HCT116 (cell line): ENCODE measurements at regions of chr1 and their contacts with region 1.

Region 1: GRCh38 chr1:205485338-205486228 is 18.9 kb upstream of the CDK18 start:
- DNase-seq: peak; percentile 56
- ATAC-seq: peak; percentile 83
- H3K4me3 ChIP-seq: no peak overlapping the region
- H3K27ac ChIP-seq: no peak overlapping the region
- H3K4me1 ChIP-seq: peaks cover 0 to 8% of the 10 kb centered on the region in 2 experiments; a peak in 3 of 4 replicates
- H3K27me3 ChIP-seq: peaks cover 18% of the 10 kb centered on the region
- CTCF ChIP-seq: peak; percentile 93 to 98 (median 95)
- POLR2A ChIP-seq: no peak
- RAD21 ChIP-seq: peak; percentile 100

Region 2: DNA sequence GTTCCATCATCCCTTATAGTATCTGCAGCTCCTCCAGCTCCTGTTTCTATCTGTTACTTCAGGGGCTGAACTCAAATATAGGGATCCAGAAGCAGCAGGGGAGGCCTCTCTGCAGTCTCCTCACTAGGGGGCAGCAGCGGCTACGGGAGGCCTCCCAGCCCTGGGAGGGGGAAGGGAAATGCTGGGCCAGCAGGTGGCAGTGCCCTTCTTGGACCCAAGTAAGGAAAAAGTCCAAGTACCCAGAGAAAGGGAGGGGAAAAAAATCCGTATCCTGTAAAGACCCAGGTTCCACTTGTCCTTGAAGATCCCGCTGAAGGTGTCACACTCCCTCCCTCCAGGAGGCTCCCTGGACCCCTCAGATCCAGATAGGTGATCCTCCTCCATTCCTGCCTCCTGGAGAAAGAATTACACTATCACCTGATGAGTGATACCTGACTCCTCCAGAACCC is 149.9 kb before region 1 on chr1:
- CTCF ChIA-PET with region 1: interaction called, 20 read pairs
- POLR2A ChIA-PET with region 1: no interaction called
- RAD21 ChIA-PET with region 1: interaction called in 1 of 2 experiments, 4 read pairs
- intact Hi-C with region 1: loop called (anchors 5 kb)
- DNase-seq: peak; percentile 79
- ATAC-seq: peak; percentile 99
- H3K4me3 ChIP-seq: no peak overlapping the region
- H3K27ac ChIP-seq: no peak overlapping the region
- H3K4me1 ChIP-seq: peaks cover 4 to 6% of the 10 kb centered on the region in 2 experiments; a peak in 3 of 4 replicates
- H3K27me3 ChIP-seq: no peaks in the 10 kb centered on the region
- CTCF ChIP-seq: peak; percentile 99 to 100 (median 99)
- POLR2A ChIP-seq: no peak
- RAD21 ChIP-seq: peak; percentile 94

Region 3: DNA sequence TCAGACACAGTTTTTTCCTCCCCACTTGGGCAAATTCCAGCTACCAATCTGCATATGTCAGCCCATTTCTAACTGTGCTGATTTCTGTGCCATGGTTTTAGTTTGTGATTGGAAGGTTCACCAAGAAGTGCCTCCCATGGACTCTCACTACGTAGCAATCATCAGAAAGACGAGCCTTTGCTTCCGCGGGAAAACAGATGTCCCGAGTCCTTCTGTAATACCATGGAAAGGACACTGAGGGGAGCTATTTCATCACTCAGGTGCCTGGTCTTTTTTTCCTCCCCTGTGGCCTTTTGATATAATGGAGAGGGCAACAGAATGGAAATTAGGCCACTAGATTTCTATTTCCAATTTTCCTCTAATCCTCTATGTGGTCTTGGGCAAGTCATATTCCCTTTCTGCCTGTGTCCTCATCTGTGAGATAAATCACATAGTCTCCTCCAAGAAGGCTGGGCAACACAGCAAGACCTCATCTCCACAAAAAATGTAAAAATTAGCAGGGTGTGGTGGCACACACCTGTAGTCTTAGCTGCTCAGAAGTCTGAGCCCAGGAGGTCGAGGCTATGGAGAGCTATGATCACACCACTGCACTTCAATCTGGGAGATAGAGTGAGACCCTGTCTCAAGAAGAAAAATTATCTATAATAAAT is 88.5 kb before region 1 on chr1:
- CTCF ChIA-PET with region 1: interaction called, 85 read pairs
- POLR2A ChIA-PET with region 1: no interaction called
- RAD21 ChIA-PET with region 1: interaction called, 20 to 26 read pairs
- intact Hi-C with region 1: loop called (anchors 1 kb)
- DNase-seq: peak; percentile 77
- ATAC-seq: peak; percentile 99
- H3K4me3 ChIP-seq: no peak overlapping the region
- H3K27ac ChIP-seq: no peak overlapping the region
- H3K4me1 ChIP-seq: peaks cover 0 to 8% of the 10 kb centered on the region in 2 experiments; a peak in 2 of 4 replicates
- H3K27me3 ChIP-seq: no peaks in the 10 kb centered on the region
- CTCF ChIP-seq: peak; percentile 82 to 97 (median 93)
- POLR2A ChIP-seq: no peak
- RAD21 ChIP-seq: peak; percentile 99

Region 4: GRCh38 chr1:205430696-205431305 is 54.8 kb before region 1 on chr1:
- CTCF ChIA-PET with region 1: interaction called, 15 read pairs
- POLR2A ChIA-PET with region 1: no interaction called
- RAD21 ChIA-PET with region 1: interaction called, 5 to 7 read pairs
- intact Hi-C with region 1: no loop called
- DNase-seq: no peak
- ATAC-seq: peak; percentile 81
- H3K4me3 ChIP-seq: peak overlapping the region; percentile 24 to 47
- H3K27ac ChIP-seq: no peak overlapping the region
- H3K4me1 ChIP-seq: peaks cover 0 to 16% of the 10 kb centered on the region in 2 experiments; a peak in 1 of 4 replicates
- H3K27me3 ChIP-seq: no peaks in the 10 kb centered on the region
- CTCF ChIP-seq: peak; percentile 75 to 85 (median 84); a peak in 5 of 6 replicates
- POLR2A ChIP-seq: no peak
- RAD21 ChIP-seq: peak; percentile 61

Region 5: GRCh38 chr1:205449750-205450443 is 35.7 kb before region 1 on chr1:
- CTCF ChIA-PET with region 1: interaction called, 24 read pairs
- POLR2A ChIA-PET with region 1: no interaction called
- RAD21 ChIA-PET with region 1: interaction called, 9 read pairs
- intact Hi-C with region 1: no loop called
- DNase-seq: peak; percentile 95
- ATAC-seq: peak; percentile 84
- H3K4me3 ChIP-seq: peak overlapping the region; percentile 77 to 82
- H3K27ac ChIP-seq: peak overlapping the region; percentile 95
- H3K4me1 ChIP-seq: peaks cover 50 to 94% of the 10 kb centered on the region in 2 experiments
- H3K27me3 ChIP-seq: 0 out of 2 replicates have a peak, but pooled peaks cover 3% of the 10 kb centered on the region
- CTCF ChIP-seq: no peak
- POLR2A ChIP-seq: no peak
- RAD21 ChIP-seq: no peak

Region 6: GRCh38 chr1:205523891-205524793 is 38.6 kb after region 1 on chr1:
- CTCF ChIA-PET with region 1: interaction called, 200 read pairs
- POLR2A ChIA-PET with region 1: no interaction called
- RAD21 ChIA-PET with region 1: interaction called, 23 to 24 read pairs
- intact Hi-C with region 1: loop called (anchors 1 kb)
- DNase-seq: peak; percentile 46
- ATAC-seq: peak; percentile 71
- H3K4me3 ChIP-seq: no peak overlapping the region
- H3K27ac ChIP-seq: no peak overlapping the region
- H3K4me1 ChIP-seq: peaks cover 0 to 11% of the 10 kb centered on the region in 2 experiments; a peak in 2 of 4 replicates
- H3K27me3 ChIP-seq: no peaks in the 10 kb centered on the region
- CTCF ChIP-seq: peak; percentile 76 to 93 (median 84)
- POLR2A ChIP-seq: no peak
- RAD21 ChIP-seq: peak; percentile 97

Region 7: GRCh38 chr1:205827623-205828022 is 342.0 kb after region 1 on chr1:
- CTCF ChIA-PET with region 1: no interaction called
- POLR2A ChIA-PET with region 1: no interaction called
- RAD21 ChIA-PET with region 1: no interaction called
- intact Hi-C with region 1: no loop called
- DNase-seq: no peak
- ATAC-seq: peak; percentile 96
- H3K4me3 ChIP-seq: no peak overlapping the region
- H3K27ac ChIP-seq: no peak overlapping the region
- H3K4me1 ChIP-seq: peaks cover 0 to 7% of the 10 kb centered on the region in 2 experiments; a peak in 1 of 4 replicates
- H3K27me3 ChIP-seq: peaks cover 10% of the 10 kb centered on the region; the same call in 1 of the 2 replicates
- CTCF ChIP-seq: peak in 2 of 3 experiments; percentile 28 to 34; a peak in 3 of 6 replicates
- POLR2A ChIP-seq: no peak
- RAD21 ChIP-seq: no peak